Activated naive CD4-positive, alpha-beta T cell treated with anti-CD3 and anti-CD28 coated beads for 36 hours (primary cell): ENCODE measurements at regions of chr12 and their contacts with region 1.

Region 1: GRCh38 chr12:101939856-101940265 is 62.5 kb downstream of the DRAM1 start:
- DNase-seq: peak; percentile 73
- H3K4me3 Mint-ChIP-seq: no peak overlapping the region
- H3K27ac Mint-ChIP-seq: no peak overlapping the region
- H3K4me1 Mint-ChIP-seq: peaks cover 9% of the 10 kb centered on the region
- H3K27me3 Mint-ChIP-seq: peaks cover 18% of the 10 kb centered on the region

Region 2: GRCh38 chr12:101407436-101408345 is 532.2 kb before region 1 on chr12 and contains the start of gene ARL1:
- CTCF ChIA-PET with region 1: no interaction called
- intact Hi-C with region 1: no loop called
- DNase-seq: peak; percentile 84
- H3K4me3 Mint-ChIP-seq: peak within 1 kb of the TSS; percentile 93
- H3K27ac Mint-ChIP-seq: peak within 1 kb of the TSS; percentile 90
- H3K4me1 Mint-ChIP-seq: peaks cover 19% of the 10 kb centered on the region
- H3K27me3 Mint-ChIP-seq: peaks cover 6% of the 10 kb centered on the region
- total RNA-seq, gene ARL1: 44.1 to 48.4 TPM

Region 3: DNA sequence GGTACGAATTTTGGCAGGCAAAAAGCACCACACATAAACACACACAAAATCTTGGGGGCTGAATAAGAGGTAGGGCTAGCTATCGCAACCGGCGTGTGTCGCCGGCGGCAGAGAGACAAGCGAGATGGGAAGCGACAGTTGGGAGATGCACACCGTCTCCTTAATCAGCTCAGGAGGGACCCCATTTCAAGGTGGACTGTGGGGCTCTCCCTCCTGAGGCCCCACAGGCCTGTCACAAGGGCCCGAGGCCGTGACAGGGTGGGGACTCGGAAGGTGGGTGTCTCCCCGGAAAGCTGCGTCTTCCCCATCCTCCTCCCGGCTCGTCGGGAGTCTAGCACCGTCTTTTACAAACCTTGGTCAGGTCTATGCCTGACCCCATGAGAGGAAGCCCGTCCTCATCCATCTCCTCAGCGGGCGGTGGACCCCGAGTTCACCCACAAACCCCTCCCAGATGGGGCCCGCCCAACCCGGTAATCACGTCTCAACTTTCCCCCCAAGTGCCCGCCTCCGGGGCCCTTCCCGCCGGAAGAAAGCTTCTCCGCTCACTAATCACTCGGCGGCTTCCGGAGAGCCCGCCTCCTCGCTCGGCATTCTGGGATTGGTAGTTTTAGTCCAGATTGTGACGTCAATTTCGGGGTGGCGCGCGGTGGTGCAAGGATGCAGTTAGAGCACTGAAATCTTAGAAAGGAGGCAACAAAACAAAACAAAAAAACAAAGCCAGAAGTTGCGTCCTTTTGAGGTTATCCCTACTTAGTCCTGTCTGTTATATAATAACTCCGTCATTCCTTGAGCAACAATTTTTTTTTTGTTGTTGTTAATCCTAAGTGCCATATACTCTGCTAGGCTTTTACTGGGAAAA is 121.9 kb after region 1 on chr12 and contains the start of gene WASHC3:
- CTCF ChIA-PET with region 1: no interaction called
- intact Hi-C with region 1: loop called (anchors 1 kb)
- DNase-seq: peak; percentile 98
- H3K4me3 Mint-ChIP-seq: peak within 1 kb of the TSS; percentile 96
- H3K27ac Mint-ChIP-seq: peak within 1 kb of the TSS; percentile 98
- H3K4me1 Mint-ChIP-seq: peaks cover 29% of the 10 kb centered on the region
- H3K27me3 Mint-ChIP-seq: no peaks in the 10 kb centered on the region
- total RNA-seq, gene WASHC3: 22.1 to 25.6 TPM

Region 4: DNA sequence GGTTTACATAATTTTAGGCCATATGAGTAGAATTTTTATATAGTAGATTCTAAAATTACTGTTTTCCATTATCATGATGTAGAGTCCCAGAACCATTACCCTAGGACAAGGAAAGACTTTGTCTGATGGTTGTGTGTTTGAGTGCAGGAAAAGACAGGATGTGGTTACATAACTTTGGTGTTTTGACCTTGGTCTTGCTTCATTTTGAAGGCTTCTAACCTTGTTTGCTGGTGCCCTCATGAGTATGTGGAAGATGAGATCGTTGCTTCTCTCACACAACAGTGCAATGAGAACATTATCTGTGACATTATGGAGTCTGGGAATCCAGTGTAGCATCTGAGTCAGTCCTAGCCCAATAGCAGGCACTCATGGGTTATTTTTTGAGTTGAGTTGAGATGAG is 434.3 kb after region 1 on chr12:
- CTCF ChIA-PET with region 1: no interaction called
- intact Hi-C with region 1: loop called (anchors 5 kb)
- DNase-seq: no peak
- H3K4me3 Mint-ChIP-seq: no peak overlapping the region
- H3K27ac Mint-ChIP-seq: no peak overlapping the region
- H3K4me1 Mint-ChIP-seq: peaks cover 5% of the 10 kb centered on the region
- H3K27me3 Mint-ChIP-seq: peaks cover 2% of the 10 kb centered on the region

Region 5: GRCh38 chr12:102740141-102740955 is 800.5 kb after region 1 on chr12:
- CTCF ChIA-PET with region 1: interaction called, 5 read pairs
- intact Hi-C with region 1: loop called (anchors 2 kb)
- DNase-seq: no peak
- H3K4me3 Mint-ChIP-seq: no peak overlapping the region
- H3K27ac Mint-ChIP-seq: no peak overlapping the region
- H3K4me1 Mint-ChIP-seq: no peaks in the 10 kb centered on the region
- H3K27me3 Mint-ChIP-seq: no peaks in the 10 kb centered on the region

Region 6: GRCh38 chr12:102879144-102879763 is 939.4 kb after region 1 on chr12:
- CTCF ChIA-PET with region 1: no interaction called
- intact Hi-C with region 1: loop called (anchors 1 kb)
- DNase-seq: peak; percentile 51
- H3K4me3 Mint-ChIP-seq: no peak overlapping the region
- H3K27ac Mint-ChIP-seq: no peak overlapping the region
- H3K4me1 Mint-ChIP-seq: no peaks in the 10 kb centered on the region
- H3K27me3 Mint-ChIP-seq: peaks cover 13% of the 10 kb centered on the region